Activated CD8-positive, alpha-beta T cell treated with anti-CD3 and anti-CD28 coated beads, Interleukin-2, amount 10 ng/mL, durations not matched to agents 7 days and 5 days (primary cell): ENCODE measurements at regions of chr2 and their contacts with region 1.

Region 1: DNA sequence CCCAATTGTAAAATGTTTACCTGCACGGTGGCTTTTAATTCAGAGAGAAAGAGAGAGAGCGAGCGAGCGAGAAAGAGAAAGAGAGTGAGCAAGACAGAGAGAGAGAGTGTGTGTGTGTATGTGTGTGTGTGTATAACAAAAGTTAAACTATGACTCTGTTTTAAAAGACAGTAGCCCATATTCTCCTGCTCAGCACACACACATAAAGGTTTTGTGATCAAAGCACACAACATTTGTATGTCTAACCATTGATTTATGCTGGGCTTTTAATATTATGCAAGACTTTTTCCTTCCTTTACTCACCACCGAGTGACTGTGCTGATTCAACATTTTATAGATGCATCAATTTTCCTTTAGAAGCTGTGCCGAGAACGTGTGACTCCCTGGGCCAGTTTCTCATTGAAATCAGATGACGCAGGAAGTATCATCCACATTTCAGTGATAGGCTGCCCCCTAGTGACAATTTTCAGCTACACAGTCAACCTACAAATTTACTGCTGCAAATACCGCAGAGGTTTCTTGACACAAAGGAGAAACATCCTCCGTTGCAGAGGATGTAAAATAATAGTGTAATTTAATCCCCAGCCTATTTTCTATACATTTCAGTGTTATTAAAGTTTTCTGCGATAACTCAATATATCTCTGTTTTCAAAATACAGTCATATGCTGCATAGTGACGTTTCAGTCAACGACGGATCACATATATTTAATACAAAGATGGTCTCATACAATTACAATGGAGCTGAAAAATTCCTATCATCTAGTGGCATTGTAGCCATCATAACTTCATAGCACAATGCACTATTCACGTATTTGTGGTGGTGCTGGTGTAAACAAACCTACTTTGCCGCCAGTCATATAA is 165.9 kb upstream of the TANK start:
- DNase-seq: peak; percentile 87
- ATAC-seq: peak; percentile 87
- H3K4me3 Mint-ChIP-seq: no peak overlapping the region
- H3K27ac Mint-ChIP-seq: no peak overlapping the region
- H3K4me1 Mint-ChIP-seq: peaks cover 9% of the 10 kb centered on the region
- H3K27me3 Mint-ChIP-seq: peaks cover 6% of the 10 kb centered on the region

Region 2: GRCh38 chr2:160109936-160110673 is 884.3 kb before region 1 on chr2:
- CTCF ChIA-PET with region 1: interaction called, 22 read pairs
- POLR2A ChIA-PET with region 1: no interaction called
- DNase-seq: peak; percentile 66
- ATAC-seq: peak; percentile 68
- H3K4me3 Mint-ChIP-seq: no peak overlapping the region
- H3K27ac Mint-ChIP-seq: no peak overlapping the region
- H3K4me1 Mint-ChIP-seq: no peaks in the 10 kb centered on the region
- H3K27me3 Mint-ChIP-seq: peaks cover 3% of the 10 kb centered on the region

Region 3: DNA sequence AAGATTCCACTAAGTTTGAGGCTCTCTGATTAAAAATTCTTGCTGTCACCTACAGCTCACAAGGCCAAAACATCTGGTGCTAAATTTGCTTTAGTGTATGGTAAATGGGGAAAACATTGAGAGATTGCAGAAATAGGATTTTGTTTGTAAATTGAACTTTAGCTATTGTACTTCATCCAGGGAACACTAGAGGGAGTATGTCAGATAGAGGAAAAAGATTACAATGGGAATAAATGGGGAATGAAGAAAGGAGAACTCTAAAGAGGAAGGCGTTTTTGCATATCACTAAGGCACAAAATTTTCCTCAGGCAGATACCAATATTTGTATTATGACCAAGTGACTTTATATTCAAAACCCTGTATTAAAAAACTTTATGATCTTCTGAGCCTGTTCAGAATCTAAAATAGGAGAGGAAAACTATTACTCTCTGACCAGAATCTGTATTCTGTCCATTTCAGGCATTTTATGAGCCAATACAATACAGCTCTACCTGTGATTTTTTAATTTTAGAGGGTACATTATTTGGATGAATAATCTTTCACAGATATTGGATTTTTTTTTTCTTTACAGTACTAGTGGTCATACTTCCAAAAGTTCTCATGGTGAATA is 742.0 kb before region 1 on chr2:
- CTCF ChIA-PET with region 1: interaction called, 20 read pairs
- POLR2A ChIA-PET with region 1: no interaction called
- DNase-seq: no peak
- ATAC-seq: no peak
- H3K4me3 Mint-ChIP-seq: no peak overlapping the region
- H3K27ac Mint-ChIP-seq: no peak overlapping the region
- H3K4me1 Mint-ChIP-seq: no peaks in the 10 kb centered on the region
- H3K27me3 Mint-ChIP-seq: peaks cover 18% of the 10 kb centered on the region

Region 4: DNA sequence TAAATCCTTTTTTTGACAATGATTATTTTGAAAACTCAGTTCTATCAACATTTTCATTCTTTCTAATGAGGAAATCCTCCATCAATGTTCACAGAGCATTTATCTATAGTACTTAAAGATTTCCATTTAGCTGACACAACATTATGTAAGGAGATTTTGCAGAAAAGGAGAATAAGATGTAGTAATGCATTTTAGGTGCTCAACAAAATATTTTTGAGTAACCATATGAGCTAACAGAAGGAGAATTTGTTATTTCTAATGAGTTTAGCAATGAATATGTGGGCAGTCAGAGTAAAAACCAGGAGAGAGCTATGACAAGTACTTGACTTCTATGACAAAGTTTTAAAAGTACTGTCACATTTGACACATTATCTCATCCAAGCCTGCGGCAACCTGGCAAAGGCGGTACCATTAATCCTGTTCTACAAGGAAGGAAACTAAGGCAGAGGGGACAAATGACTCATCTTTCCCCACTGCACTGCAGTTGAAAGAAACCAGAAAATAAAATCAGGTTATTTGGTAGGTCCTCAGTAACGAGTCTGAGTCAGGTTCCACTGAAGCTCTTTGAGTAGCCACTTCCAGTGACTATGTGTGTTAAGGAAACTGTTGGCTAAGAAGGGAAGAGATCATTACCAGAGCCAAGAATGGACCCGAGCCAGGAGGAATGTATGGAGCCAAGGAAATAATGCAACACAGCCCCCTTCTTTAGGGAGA is 660.2 kb before region 1 on chr2:
- CTCF ChIA-PET with region 1: interaction called, 10 read pairs
- POLR2A ChIA-PET with region 1: no interaction called
- DNase-seq: no peak
- ATAC-seq: no peak
- H3K4me3 Mint-ChIP-seq: no peak overlapping the region
- H3K27ac Mint-ChIP-seq: peak overlapping the region; percentile 54
- H3K4me1 Mint-ChIP-seq: peaks cover 73% of the 10 kb centered on the region
- H3K27me3 Mint-ChIP-seq: no peaks in the 10 kb centered on the region

Region 5: DNA sequence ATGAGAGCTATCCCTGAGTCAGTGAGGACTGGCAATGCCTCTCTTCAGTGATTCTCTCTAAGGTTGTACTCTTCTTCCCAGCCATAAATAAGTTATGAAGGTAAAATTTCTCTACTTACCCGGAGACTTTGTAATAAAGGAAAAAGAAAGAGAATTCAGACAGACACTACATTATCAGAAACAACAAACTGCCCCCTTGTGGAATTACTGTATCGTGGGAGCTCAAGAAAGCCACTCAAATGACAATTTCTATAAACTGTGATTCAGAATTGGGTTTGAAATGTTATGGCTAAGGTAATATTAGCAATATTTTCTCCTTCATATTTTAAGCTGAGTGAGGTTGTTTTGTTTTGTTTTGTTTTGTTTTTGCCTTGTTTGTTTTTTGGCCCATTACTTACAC is 10.0 kb after region 1 on chr2:
- CTCF ChIA-PET with region 1: interaction called, 27 read pairs
- POLR2A ChIA-PET with region 1: no interaction called
- DNase-seq: no peak
- ATAC-seq: no peak
- H3K4me3 Mint-ChIP-seq: no peak overlapping the region
- H3K27ac Mint-ChIP-seq: no peak overlapping the region
- H3K4me1 Mint-ChIP-seq: no peaks in the 10 kb centered on the region
- H3K27me3 Mint-ChIP-seq: peaks cover 25% of the 10 kb centered on the region